ENCODE measurements at regions of chr17 and their contacts with region 1.

Region 1: DNA sequence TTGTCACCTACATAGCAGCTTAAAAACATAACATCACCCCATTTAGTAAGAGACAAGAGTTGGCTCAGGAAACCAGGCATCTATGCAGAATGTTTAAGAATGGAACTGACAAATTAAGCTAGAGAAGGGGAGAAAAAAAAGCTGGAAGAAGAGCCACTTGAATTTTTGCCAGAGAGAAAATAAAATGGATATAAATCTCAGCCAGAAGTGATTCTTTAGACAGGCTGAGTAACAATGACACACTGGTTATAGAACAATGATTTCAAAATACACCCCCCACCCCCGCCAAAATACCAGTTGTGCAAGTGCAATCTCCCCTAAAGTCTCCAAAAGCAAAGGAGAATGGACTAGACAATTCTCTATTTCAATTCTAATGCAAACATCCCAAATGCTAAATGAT is 22.4 kb downstream of the LSM12 start:
- DNase-seq: no peak
- H3K4me3 ChIP-seq: no peak overlapping the region
- CTCF ChIP-seq: no peak

Region 2: GRCh38 chr17:43878260-43879175 is 165.5 kb before region 1 on chr17:
- CTCF ChIA-PET with region 1: interaction called, 41 read pairs
- POLR2A ChIA-PET with region 1: no interaction called
- DNase-seq: peak; percentile 65
- H3K4me3 ChIP-seq: no peak overlapping the region
- CTCF ChIP-seq: peak; percentile 100

Region 3: DNA sequence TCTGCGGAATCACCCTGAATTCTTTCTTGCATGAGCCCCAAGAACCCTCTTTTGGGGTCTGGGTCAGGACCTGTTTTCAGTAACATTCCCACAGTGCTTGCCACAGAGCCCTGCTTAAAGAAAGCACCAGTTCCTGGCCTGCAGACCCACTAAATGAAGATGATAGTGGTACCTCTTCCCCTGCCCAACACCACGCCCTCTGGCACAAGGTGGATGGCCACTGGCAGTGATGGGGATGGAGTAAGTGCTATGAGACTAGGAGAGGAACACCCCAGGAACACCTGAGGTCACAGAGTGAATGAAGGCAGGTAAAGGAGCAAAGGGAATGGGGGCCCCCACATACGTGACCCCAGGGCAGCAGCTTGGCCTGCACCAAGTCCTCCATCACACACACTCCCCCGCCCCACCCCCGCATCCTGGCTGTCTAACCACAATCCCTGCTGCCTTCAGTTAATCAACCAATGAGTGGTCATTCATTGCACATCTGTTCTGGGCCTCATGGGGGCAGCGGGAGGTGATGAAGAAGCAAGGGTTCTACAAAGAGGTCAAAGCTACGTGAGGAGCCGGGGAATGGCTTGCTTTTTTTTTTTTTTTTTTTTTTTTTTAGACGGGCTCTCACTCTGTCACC is 97.9 kb before region 1 on chr17:
- CTCF ChIA-PET with region 1: interaction called, 123 read pairs
- POLR2A ChIA-PET with region 1: no interaction called
- DNase-seq: no peak
- H3K4me3 ChIP-seq: no peak overlapping the region
- CTCF ChIP-seq: no peak

Region 4: GRCh38 chr17:44024271-44024663 is 19.8 kb before region 1 on chr17:
- CTCF ChIA-PET with region 1: interaction called, 96 read pairs
- POLR2A ChIA-PET with region 1: interaction called, 3 read pairs
- DNase-seq: no peak
- H3K4me3 ChIP-seq: no peak overlapping the region
- CTCF ChIP-seq: no peak

Region 5: DNA sequence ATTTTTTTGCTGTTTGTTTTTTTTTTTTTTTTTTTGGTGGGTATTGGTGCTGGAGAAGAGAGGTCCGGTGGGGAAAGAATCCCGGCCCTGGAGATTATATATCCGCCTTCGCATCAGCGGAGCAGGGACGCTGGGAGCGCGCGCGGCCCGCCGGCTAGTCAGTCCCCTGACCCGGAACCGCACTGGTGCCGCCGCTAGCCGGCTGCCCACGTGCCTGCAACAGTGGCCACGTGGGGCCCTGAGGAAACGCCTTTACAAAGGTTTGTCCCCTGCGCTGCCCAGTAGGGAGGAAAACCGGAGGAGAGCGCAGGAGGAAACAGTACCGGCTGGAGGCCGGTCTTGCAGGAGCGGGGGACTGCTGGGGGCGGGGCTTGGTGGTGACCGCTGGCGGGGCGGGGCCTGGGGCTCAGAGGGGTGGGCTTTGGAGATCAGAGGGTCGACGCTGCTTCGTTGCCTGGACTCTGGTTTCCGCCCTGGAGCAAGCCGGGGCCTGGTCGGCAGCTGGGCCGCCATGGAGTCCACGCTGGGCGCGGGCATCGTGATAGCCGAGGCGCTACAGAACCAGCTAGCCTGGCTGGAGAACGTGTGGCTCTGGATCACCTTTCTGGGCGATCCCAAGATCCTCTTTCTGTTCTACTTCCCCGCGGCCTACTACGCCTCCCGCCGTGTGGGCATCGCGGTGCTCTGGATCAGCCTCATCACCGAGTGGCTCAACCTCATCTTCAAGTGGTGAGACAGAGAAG is 26.6 kb after region 1 on chr17 and contains the start of gene G6PC3:
- CTCF ChIA-PET with region 1: interaction called, 10 read pairs
- POLR2A ChIA-PET with region 1: no interaction called
- DNase-seq: peak; percentile 89
- H3K4me3 ChIP-seq: peak within 1 kb of the TSS; percentile 81
- CTCF ChIP-seq: peak; percentile 6

Region 6: DNA sequence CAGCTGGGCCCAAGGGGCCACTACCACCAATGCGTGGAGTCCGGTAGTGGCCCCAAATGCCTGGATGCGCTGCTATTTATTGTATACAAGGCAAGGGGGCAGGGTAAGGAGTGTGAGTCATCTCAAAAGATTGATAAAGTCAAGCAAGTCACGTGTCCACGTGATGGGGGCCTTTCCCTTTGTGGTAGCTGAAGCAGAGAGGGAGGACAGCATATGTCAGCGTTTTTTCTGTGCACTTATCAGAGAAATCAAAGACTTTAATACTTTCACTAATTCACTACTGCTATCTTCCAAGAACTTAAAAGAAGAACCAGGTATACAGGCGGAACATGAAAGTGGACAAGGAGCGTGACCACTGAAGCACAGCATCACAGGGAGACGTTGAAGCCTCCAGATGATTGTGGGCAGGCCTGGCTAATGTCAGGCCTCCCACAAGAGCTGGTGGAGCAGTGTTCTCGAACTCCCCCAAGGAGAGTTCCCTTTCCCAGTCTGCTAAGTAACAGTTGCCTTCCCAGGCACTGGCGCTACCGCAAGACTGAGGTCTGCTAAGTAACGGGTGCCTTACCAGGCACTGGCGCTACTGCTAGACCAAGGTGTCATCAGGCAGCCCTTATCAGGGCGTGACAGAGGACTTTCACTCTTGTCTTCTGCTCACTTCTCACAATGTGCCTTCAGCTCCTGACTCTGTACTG is 115.6 kb after region 1 on chr17:
- CTCF ChIA-PET with region 1: no interaction called
- POLR2A ChIA-PET with region 1: no interaction called
- DNase-seq: no peak
- H3K4me3 ChIP-seq: no peak overlapping the region
- CTCF ChIP-seq: no peak

Region 7: GRCh38 chr17:44170499-44171201 is 126.6 kb after region 1 on chr17 and contains the start of gene ASB16:
- CTCF ChIA-PET with region 1: interaction called, 27 read pairs
- POLR2A ChIA-PET with region 1: no interaction called
- DNase-seq: no peak
- H3K4me3 ChIP-seq: no peak within 1 kb of the TSS
- CTCF ChIP-seq: no peak